ENCODE measurements at regions of chr3 and their contacts with region 1.

Region 1: DNA sequence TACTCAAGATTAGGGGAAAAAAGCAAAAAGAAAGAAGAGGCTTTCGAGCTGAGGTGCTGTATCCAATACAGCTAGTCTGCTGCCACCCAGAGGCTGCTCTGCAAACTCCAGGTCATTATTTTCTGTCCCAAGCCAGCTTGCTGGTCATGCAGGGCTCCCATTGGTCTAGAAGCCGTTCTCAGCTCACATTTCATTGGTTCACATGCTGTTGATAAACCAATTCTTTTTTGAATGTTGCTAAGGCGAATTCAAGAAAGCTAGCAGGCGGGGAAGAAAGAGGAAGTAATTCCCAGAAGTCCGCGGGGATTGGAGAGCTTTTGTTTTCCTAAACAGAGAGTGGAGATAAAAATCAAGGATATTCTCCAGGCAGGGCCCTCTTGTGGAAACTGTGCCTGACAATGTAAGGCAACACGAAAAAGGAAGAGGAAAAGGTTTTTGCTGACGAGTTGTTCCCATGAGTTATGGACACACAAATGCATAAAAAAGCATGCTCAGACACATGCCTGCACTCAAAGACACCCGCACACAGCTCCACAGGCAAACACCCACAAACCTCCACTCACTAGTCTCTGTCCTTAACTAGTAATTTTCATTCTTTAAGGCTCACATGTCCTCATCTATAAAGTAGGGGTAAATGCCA is 33.4 kb downstream of the FSTL1 start:
- DNase-seq: peak; percentile 96
- H3K4me3 ChIP-seq: peak overlapping the region in 1 of 2 donors; percentile 15
- H3K27ac ChIP-seq: peak overlapping the region in 1 of 2 donors; percentile 41
- H3K4me1 ChIP-seq: peaks cover 44% of the 10 kb centered on the region
- H3K27me3 ChIP-seq: no peaks in the 10 kb centered on the region
- CTCF ChIP-seq: peak; percentile 84 to 94 (median 94)
- POLR2A ChIP-seq: no peak

Region 2: GRCh38 chr3:120245386-120245785 is 172.0 kb before region 1 on chr3:
- intact Hi-C with region 1: loop called (anchors 10 kb)
- DNase-seq: no peak
- H3K4me3 ChIP-seq: no peak overlapping the region
- H3K27ac ChIP-seq: no peak overlapping the region
- H3K4me1 ChIP-seq: no peaks in the 10 kb centered on the region
- H3K27me3 ChIP-seq: no peaks in the 10 kb centered on the region
- CTCF ChIP-seq: no peak
- POLR2A ChIP-seq: no peak

Region 3: GRCh38 chr3:120498556-120499346 is 81.4 kb after region 1 on chr3:
- intact Hi-C with region 1: loop called (anchors 10 kb)
- DNase-seq: peak; percentile 16
- H3K4me3 ChIP-seq: no peak overlapping the region
- H3K27ac ChIP-seq: no peak overlapping the region
- H3K4me1 ChIP-seq: no peaks in the 10 kb centered on the region
- H3K27me3 ChIP-seq: no peaks in the 10 kb centered on the region
- CTCF ChIP-seq: no peak
- POLR2A ChIP-seq: no peak

Region 4: DNA sequence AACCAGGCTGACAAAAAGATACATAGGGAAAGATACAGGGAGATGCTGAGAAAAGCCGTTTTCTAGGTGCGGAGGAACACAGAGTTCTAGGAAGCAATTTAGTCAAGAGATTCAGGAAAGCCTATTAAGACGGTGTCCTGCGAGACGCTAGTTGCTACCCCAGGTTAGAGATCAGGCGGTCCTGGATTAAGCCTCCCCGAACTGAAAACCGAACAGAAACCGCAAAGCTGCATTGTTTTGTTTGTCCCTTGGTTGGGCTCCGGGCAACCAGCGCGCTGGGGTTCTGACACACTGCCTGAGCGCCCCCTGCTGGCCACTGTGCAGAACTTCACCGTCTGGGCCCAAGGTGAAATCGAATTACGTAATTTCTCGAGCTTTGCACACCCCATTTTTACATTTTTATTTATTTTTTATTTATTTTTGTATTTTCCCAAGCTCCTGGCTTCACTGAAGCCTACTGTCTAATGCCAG is 141.4 kb after region 1 on chr3:
- intact Hi-C with region 1: loop called (anchors 5 kb)
- DNase-seq: peak; percentile 95
- H3K4me3 ChIP-seq: peak overlapping the region; percentile 43 to 62
- H3K27ac ChIP-seq: peak overlapping the region; percentile 75 to 89
- H3K4me1 ChIP-seq: peaks cover 53% of the 10 kb centered on the region
- H3K27me3 ChIP-seq: no peaks in the 10 kb centered on the region
- CTCF ChIP-seq: peak; percentile 99 to 100 (median 100)
- POLR2A ChIP-seq: no peak